ENCODE measurements at regions of chr2 and their contacts with region 1.

Region 1: DNA sequence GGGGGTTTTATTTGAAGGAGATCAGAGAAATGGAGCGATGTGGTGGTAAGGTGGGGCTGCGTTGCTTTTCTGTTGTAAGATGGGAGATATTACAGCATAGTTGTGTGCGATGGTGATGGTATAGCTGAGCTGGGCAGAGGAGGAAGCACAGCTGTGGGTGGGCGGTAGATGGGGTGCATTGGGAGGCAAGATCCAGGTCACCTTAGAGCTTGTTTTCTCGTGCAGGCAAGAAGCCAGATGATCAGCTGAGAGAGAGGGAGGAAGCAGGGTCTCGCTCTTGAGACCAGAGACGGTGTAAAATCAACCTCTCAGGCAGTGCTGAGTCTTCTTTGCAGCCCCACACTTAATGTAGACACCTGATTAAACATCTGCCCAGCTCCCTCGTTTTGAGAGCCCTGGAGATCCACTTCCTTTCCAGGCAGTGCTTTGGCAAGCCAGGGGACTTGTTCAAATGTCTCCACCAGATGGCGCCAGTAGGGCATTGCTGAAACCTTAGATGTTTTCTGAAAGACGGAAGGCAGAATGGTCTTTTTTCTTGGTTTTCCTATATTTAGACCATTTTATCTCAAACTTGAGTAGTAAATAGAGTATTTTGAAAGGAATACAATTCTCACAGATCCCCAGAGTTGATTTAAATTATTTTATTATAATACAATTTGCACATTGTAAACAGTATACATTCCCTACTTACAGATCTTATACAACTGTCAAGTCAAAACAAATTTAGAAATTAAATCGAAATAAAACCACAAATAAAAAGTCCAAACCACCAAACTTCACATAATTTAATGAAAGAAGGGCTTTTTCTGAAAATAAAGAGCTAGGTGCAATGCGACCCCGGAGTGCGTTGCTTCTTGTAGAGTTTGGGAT is 21.1 kb upstream of the LYPD6B start:
- DNase-seq: peak; percentile 77
- CTCF ChIP-seq: peak; percentile 84

Region 2: GRCh38 chr2:148920559-148920958 is 96.8 kb before region 1 on chr2:
- CTCF ChIA-PET with region 1: no interaction called
- POLR2A ChIA-PET with region 1: no interaction called
- DNase-seq: no peak
- CTCF ChIP-seq: no peak

Region 3: GRCh38 chr2:148933456-148933855 is 83.9 kb before region 1 on chr2:
- CTCF ChIA-PET with region 1: no interaction called
- POLR2A ChIA-PET with region 1: no interaction called
- DNase-seq: no peak
- CTCF ChIP-seq: no peak

Region 4: GRCh38 chr2:149000158-149000938 is 17.0 kb before region 1 on chr2:
- CTCF ChIA-PET with region 1: interaction called, 11 read pairs
- POLR2A ChIA-PET with region 1: no interaction called
- DNase-seq: no peak
- CTCF ChIP-seq: no peak

Region 5: GRCh38 chr2:149040451-149040850 is 23.1 kb after region 1 on chr2:
- CTCF ChIA-PET with region 1: interaction called, 259 read pairs
- POLR2A ChIA-PET with region 1: interaction called, 6 read pairs
- DNase-seq: peak; percentile 67
- CTCF ChIP-seq: peak; percentile 68

Region 6: DNA sequence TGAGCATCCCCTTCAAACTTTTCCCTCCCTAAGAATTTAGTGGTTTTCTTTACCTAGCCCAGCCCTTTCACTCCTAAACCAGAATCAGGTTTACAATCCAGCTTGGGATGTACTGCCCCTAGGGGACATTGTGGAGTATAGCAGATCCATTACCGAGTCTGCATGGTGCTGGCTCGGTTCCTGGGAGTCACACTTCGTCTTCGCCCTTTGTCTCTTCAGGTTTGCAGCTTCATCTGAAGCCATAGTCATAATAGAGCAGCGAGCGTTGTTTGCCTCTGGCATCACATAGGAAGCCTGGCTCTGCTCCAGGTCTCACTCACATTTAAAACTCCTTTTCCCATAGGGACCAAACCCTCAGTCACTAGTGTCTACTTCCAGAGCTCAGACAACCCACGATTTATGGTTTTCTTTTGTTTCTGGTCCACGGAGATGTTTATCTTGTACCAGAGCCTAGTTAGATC is 296.2 kb after region 1 on chr2:
- CTCF ChIA-PET with region 1: interaction called, 31 read pairs
- POLR2A ChIA-PET with region 1: no interaction called
- DNase-seq: peak; percentile 62
- CTCF ChIP-seq: peak; percentile 46

Region 7: DNA sequence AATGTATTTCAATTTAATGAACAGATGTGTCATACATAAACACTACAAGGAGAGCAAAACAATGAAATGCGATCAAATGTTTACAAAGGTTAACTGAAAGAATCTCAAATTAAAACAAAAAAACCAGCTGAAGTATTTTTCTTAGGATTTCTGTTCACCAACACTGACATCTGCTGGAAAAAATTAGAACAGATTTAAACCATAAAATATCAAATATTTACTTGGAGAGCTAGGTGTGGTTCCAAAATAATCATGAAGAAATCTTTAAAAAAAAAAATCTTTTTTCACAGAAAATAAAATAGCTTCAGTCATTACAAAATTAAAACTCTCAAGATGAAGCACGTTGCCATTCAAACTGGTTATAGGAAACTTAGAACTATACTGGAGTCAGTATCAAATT is 556.4 kb after region 1 on chr2:
- CTCF ChIA-PET with region 1: interaction called, 25 read pairs
- POLR2A ChIA-PET with region 1: no interaction called
- DNase-seq: no peak
- CTCF ChIP-seq: peak; percentile 25